ENCODE measurements at regions of chr12 and their contacts with region 1.

Region 1: GRCh38 chr12:93591137-93591868 is 18.8 kb downstream of the SOCS2 start:
- DNase-seq: peak; percentile 48
- H3K4me3 Mint-ChIP-seq: peak overlapping the region; percentile 87
- H3K27ac Mint-ChIP-seq: no peak overlapping the region
- H3K4me1 Mint-ChIP-seq: peaks cover 15% of the 10 kb centered on the region
- H3K27me3 Mint-ChIP-seq: peaks cover 38% of the 10 kb centered on the region

Region 2: GRCh38 chr12:93550748-93551611 is 40.3 kb before region 1 on chr12:
- CTCF ChIA-PET with region 1: no interaction called
- POLR2A ChIA-PET with region 1: no interaction called
- intact Hi-C with region 1: no loop called
- DNase-seq: no peak
- H3K4me3 Mint-ChIP-seq: no peak overlapping the region
- H3K27ac Mint-ChIP-seq: no peak overlapping the region
- H3K4me1 Mint-ChIP-seq: no peaks in the 10 kb centered on the region
- H3K27me3 Mint-ChIP-seq: no peaks in the 10 kb centered on the region

Region 3: DNA sequence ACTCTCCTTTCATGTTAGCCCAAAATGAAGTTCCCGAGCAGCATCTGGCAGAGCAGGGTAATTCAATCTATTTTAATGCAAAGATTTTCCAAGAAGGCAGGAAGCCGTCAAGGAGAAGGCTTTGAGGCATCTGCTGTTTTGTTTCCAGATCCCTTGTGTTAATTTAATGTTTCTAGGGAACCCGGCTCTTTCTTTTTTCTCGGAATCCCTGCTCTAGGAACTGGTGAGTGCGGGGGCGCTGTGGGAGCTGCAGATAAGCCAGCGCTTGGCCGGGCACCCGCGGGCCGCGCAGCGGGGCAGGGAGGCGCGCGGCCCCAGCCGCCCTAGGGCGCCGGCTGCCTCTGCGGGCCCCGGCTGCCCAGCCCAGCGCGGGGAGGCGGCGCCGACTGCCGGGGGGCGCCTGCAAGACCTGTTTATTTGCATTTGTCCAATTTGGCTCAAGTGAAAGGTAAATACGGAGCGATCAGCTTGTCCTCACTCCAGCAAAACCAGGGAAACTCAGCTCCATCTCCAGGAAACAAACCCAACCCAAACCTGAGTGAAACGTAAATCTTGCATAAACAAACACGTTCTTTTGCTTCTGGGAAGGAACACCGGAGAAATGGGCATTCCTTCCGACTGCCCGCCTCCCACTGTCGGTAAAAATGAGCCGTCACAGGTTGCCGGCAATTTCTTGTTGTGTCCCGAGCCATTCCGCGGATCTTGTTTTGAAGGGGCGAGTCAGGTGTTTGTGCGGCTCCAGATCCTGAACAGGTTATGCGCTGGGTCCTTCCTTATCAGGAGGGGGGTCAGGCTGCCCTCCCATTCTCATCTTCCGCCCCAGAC is 151.0 kb after region 1 on chr12:
- CTCF ChIA-PET with region 1: no interaction called
- POLR2A ChIA-PET with region 1: no interaction called
- intact Hi-C with region 1: loop called (anchors 5 kb)
- DNase-seq: peak; percentile 77
- H3K4me3 Mint-ChIP-seq: peak overlapping the region; percentile 74
- H3K27ac Mint-ChIP-seq: peak overlapping the region; percentile 81
- H3K4me1 Mint-ChIP-seq: peaks cover 35% of the 10 kb centered on the region
- H3K27me3 Mint-ChIP-seq: no peaks in the 10 kb centered on the region